Heart left ventricle (tissue), 16 donors: ENCODE measurements at regions of chr9 and their contacts with region 1.

Region 1: GRCh38 chr9:5499889-5500398 is 10.4 kb upstream of the PDCD1LG2 start:
- DNase-seq: peak in 3 of 5 donors; percentile 35 to 65 (median 60)
- ATAC-seq: peak; percentile 55 to 69 (median 61)
- H3K4me3 ChIP-seq: no peak overlapping the region
- H3K27ac ChIP-seq: peak overlapping the region; percentile 62 to 95 (median 85)
- H3K4me1 ChIP-seq: peaks cover 5 to 42% (median 26%) of the 10 kb centered on the region in 12 donors
- H3K27me3 ChIP-seq: no peaks in the 10 kb centered on the region
- CTCF ChIP-seq: no peak
- POLR2A ChIP-seq: no peak

Region 2: DNA sequence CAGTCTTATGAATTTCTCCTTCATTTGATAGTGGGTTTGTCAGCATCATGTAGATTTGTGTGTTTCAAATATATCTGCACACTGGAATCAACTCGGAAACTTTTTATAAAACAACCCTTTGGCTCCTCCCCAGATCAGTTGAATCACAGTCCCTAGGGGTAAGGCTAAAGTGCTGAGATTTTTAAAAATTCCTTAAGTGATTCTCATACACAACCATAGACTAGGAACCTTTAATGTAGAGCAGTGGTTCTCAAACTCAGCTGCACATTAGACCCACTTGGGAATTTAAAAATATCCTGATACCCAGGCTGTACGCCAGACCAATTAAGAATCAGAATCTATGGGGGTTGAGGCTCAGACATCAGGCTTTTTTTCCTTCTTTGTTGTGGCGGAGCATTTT is 532.4 kb before region 1 on chr9:
- intact Hi-C with region 1: no loop called
- DNase-seq: no peak
- ATAC-seq: peak in 3 of 4 donors; percentile 20 to 74 (median 37)
- H3K4me3 ChIP-seq: no peak overlapping the region
- H3K27ac ChIP-seq: no peak overlapping the region
- H3K4me1 ChIP-seq: peaks cover 0 to 33% (median 0%) of the 10 kb centered on the region in 12 donors
- H3K27me3 ChIP-seq: no peaks in the 10 kb centered on the region
- CTCF ChIP-seq: no peak
- POLR2A ChIP-seq: no peak

Region 3: DNA sequence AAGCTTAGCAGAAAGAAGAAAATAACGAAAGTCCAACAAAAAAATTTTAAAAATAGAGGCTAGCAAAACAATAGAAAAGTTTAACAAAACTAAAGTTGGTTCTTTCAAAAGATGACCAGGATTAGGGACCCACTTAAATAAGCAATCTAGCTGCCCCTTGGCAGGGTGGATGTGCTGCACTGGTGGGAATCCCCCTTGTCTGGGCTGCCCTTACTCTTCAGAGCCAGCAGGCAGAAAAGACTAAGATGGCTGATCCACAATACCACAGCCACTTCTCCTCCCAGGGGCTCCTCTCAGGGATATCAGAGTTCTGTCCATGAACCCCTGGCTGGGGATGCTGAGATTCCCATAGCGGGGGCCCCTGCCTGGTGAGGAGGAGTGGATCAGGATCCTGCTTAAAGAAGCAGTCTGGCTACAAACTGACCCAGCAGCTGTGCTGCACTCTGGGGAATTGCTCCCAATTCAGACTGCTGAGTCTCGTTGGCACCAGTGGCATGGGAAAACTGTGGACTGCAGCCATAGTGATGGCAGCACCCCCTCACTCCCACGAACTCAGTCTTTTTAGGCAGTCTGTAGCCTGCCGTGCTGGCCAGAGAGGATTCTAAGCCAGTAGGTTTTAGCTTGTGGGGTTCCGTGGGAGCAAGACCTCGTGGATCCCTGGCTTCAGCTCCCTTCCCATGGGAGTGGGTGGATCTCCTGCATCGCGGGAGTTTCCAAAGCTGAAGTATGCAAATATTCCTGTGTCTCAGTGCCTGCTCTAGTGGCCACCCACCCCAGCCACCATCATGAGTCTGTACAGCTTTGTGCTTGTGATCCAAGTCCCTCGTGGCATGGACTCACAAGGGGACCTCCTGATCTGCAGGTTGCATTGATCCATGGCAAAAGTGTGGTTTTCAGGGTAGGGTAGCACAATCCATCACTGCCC is 311.6 kb before region 1 on chr9:
- intact Hi-C with region 1: no loop called
- DNase-seq: no peak
- ATAC-seq: no peak
- H3K4me3 ChIP-seq: no peak overlapping the region
- H3K27ac ChIP-seq: no peak overlapping the region
- H3K4me1 ChIP-seq: no peaks in the 10 kb centered on the region
- H3K27me3 ChIP-seq: peaks cover 0 to 8% (median 0%) of the 10 kb centered on the region in 9 donors
- CTCF ChIP-seq: no peak
- POLR2A ChIP-seq: no peak

Region 4: GRCh38 chr9:5450359-5451091 is 49.4 kb before region 1 on chr9 and contains the start of gene CD274:
- intact Hi-C with region 1: loop called in 6 of 10 experiments (anchors 5 kb)
- DNase-seq: peak; percentile 90 to 95 (median 94)
- ATAC-seq: peak; percentile 96 to 99 (median 98)
- H3K4me3 ChIP-seq: peak within 1 kb of the TSS; percentile 7 to 83 (median 66)
- H3K27ac ChIP-seq: peak within 1 kb of the TSS; percentile 6 to 97 (median 80)
- H3K4me1 ChIP-seq: peaks cover 0 to 85% (median 21%) of the 10 kb centered on the region in 12 donors
- H3K27me3 ChIP-seq: no peaks in the 10 kb centered on the region
- CTCF ChIP-seq: peak; percentile 53 to 88 (median 66)
- POLR2A ChIP-seq: no peak
- total RNA-seq, gene CD274: 11.6 to 54.4 (median 15.7) TPM

Region 5: GRCh38 chr9:5459289-5459829 is 40.6 kb before region 1 on chr9:
- intact Hi-C with region 1: loop called in 6 of 10 experiments (anchors 5 kb)
- DNase-seq: no peak
- ATAC-seq: peak in 1 of 4 donors; percentile 48
- H3K4me3 ChIP-seq: no peak overlapping the region
- H3K27ac ChIP-seq: peak overlapping the region in 1 of 12 donors; percentile 50
- H3K4me1 ChIP-seq: peaks cover 0 to 58% (median 0%) of the 10 kb centered on the region in 12 donors
- H3K27me3 ChIP-seq: no peaks in the 10 kb centered on the region
- CTCF ChIP-seq: no peak
- POLR2A ChIP-seq: no peak

Region 6: GRCh38 chr9:5575000-5575399 is 75.1 kb after region 1 on chr9:
- intact Hi-C with region 1: loop called in 2 of 10 experiments (anchors 5 kb)
- DNase-seq: no peak
- ATAC-seq: peak in 2 of 4 donors; percentile 45 to 61
- H3K4me3 ChIP-seq: no peak overlapping the region
- H3K27ac ChIP-seq: no peak overlapping the region
- H3K4me1 ChIP-seq: peaks cover 0 to 18% (median 9%) of the 10 kb centered on the region in 12 donors
- H3K27me3 ChIP-seq: no peaks in the 10 kb centered on the region
- CTCF ChIP-seq: no peak
- POLR2A ChIP-seq: no peak

Region 7: GRCh38 chr9:5628530-5629311 is 128.8 kb after region 1 on chr9 and contains the start of gene RIC1:
- intact Hi-C with region 1: no loop called
- DNase-seq: peak; percentile 93 to 95 (median 93)
- ATAC-seq: peak; percentile 87 to 97 (median 96)
- H3K4me3 ChIP-seq: peak within 1 kb of the TSS; percentile 66 to 98 (median 94)
- H3K27ac ChIP-seq: peak within 1 kb of the TSS; percentile 87 to 99 (median 96)
- H3K4me1 ChIP-seq: peaks cover 0 to 79% (median 33%) of the 10 kb centered on the region in 12 donors
- H3K27me3 ChIP-seq: no peaks in the 10 kb centered on the region
- CTCF ChIP-seq: peak in 6 of 12 donors; percentile 8 to 24 (median 20)
- POLR2A ChIP-seq: peak; percentile 87 to 98
- total RNA-seq, gene RIC1: 7.0 to 14.4 (median 9.7) TPM